Heart left ventricle (tissue), 16 donors: ENCODE measurements at regions of chr12 and their contacts with region 1.

Region 1: DNA sequence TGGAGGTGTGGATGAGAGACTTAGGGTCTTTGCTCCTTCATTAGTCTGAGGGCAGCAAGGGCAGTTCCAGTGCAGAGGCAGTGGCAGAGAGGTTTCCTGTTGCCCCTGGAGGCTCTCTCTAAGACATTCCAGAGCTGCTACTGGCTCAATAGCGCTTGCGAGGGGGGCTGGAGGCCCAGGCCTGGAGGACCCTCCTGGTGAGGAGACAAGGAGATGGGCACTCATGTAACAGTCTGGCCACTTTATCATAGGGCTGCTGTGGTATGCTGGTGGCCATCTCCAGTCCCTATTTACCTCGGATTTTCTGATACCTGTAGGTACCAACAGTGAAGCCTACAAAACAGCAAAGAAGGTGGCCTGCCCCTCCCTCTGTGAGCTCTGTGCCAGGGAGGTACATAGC is 12.7 kb downstream of the CLEC2A start:
- DNase-seq: no peak
- ATAC-seq: no peak
- H3K4me3 ChIP-seq: no peak overlapping the region
- H3K27ac ChIP-seq: no peak overlapping the region
- H3K4me1 ChIP-seq: no peaks in the 10 kb centered on the region
- H3K27me3 ChIP-seq: peaks cover 0 to 4% (median 0%) of the 10 kb centered on the region in 9 donors
- CTCF ChIP-seq: no peak
- POLR2A ChIP-seq: no peak

Region 2: GRCh38 chr12:9615420-9616136 is 303.9 kb before region 1 on chr12:
- intact Hi-C with region 1: no loop called
- DNase-seq: no peak
- ATAC-seq: no peak
- H3K4me3 ChIP-seq: peak overlapping the region in 1 of 12 donors; percentile 16
- H3K27ac ChIP-seq: peak overlapping the region in 1 of 12 donors; percentile 79
- H3K4me1 ChIP-seq: peaks cover 0 to 14% (median 0%) of the 10 kb centered on the region in 12 donors
- H3K27me3 ChIP-seq: no peaks in the 10 kb centered on the region
- CTCF ChIP-seq: no peak
- POLR2A ChIP-seq: no peak

Region 3: DNA sequence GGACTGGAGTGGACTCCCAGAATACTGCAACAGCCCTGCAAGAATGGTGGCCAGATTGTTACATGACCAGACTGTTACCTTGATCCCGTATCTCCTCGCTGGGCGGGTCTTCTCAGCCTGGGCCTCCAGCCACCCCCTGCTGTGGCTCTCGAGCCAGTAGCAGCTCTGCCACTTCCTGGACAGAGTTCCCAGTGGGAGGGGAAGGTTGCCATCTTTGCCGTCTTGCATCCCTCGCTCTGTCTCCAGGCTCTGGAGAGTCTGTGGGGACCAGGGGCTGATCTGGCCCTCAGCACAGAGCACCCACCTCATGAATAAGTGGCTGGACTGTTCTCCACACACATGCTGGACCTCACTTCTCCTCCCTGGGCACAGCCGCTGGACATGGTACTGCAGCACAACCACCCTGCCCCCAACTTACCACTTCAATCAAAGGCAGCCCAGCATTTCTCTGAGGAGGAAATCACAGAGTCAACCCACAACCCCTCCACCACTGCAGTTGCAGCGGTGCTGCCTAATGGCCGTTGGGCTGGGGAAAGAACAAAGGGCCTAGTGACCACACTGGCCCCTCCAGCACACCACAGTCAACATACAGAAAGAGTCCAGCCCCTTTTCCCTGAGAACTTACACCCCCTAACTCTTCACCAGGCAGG is 99.0 kb before region 1 on chr12:
- intact Hi-C with region 1: loop called in 2 of 10 experiments (anchors 5 to 10 kb)
- DNase-seq: no peak
- ATAC-seq: no peak
- H3K4me3 ChIP-seq: no peak overlapping the region
- H3K27ac ChIP-seq: no peak overlapping the region
- H3K4me1 ChIP-seq: no peaks in the 10 kb centered on the region
- H3K27me3 ChIP-seq: peaks cover 0 to 4% (median 0%) of the 10 kb centered on the region in 9 donors
- CTCF ChIP-seq: no peak
- POLR2A ChIP-seq: no peak